ENCODE measurements at regions of chrX and their contacts with region 1.

Region 1: DNA sequence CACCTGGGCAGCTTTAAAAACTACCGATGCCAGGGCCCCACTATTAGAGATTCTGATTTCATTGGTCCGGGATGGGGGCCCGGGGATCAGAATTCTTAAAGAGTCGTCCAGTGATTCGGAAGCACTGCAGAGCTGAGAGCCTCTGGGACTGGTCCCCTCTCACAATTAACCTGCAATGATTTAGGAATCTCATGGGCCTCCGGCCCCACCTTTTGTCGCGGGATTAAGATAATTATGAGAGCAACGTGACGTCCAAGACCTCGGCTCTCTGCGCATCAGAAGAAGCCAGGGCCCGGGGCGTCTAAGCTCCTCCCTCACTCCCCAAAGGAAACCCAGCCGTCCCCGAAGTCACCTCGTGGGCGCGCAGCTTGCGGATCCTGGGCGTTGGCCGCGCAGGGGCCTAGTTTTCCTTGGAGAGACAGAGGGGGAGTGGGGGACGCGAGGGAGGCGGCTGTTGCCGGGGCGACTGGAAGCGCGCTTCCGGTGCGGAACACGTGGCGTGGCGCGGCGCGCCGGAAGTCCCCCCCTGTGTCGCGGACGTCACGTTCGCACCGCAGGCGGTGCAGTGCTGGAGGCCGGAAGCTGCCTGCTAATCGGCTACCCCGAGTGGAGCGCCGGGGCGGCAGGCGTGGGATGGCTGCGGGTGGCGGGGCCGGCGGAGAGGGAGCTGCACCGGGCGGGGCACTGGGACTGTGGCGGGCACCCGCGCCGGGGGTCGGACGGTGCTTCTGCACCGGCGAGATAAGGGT is at the start of gene GEMIN8:
- DNase-seq: peak; percentile 92
- H3K4me3 ChIP-seq: peak within 1 kb of the TSS; percentile 76 to 78
- H3K27ac ChIP-seq: peak within 1 kb of the TSS; percentile 92
- H3K4me1 ChIP-seq: peaks cover 14 to 20% of the 10 kb centered on the region in 2 experiments; a peak in 3 of 4 replicates
- H3K27me3 ChIP-seq: no peaks in the 10 kb centered on the region
- CTCF ChIP-seq: no peak
- EP300 ChIP-seq: peak in 1 of 2 experiments; percentile 51; a peak in 1 of 4 replicates
- RAD21 ChIP-seq: 0 out of 2 replicates have a peak, but pooled peaks have one; percentile 13
- polyA plus RNA-seq, gene GEMIN8: 69.8 and 78.0 TPM in 2 replicates

Region 2: GRCh38 chrX:13506574-13506973 is 523.0 kb before region 1 on chrX:
- CTCF ChIA-PET with region 1: interaction called, 32 read pairs
- POLR2A ChIA-PET with region 1: no interaction called
- DNase-seq: peak; percentile 62
- H3K4me3 ChIP-seq: peak overlapping the region in 1 of 2 experiments; percentile 9; a peak in 1 of 4 replicates
- H3K27ac ChIP-seq: no peak overlapping the region
- H3K4me1 ChIP-seq: no peaks in the 10 kb centered on the region
- H3K27me3 ChIP-seq: no peaks in the 10 kb centered on the region; the same call in 1 of the 2 replicates
- CTCF ChIP-seq: peak; percentile 94
- EP300 ChIP-seq: no peak
- RAD21 ChIP-seq: peak; percentile 92

Region 3: DNA sequence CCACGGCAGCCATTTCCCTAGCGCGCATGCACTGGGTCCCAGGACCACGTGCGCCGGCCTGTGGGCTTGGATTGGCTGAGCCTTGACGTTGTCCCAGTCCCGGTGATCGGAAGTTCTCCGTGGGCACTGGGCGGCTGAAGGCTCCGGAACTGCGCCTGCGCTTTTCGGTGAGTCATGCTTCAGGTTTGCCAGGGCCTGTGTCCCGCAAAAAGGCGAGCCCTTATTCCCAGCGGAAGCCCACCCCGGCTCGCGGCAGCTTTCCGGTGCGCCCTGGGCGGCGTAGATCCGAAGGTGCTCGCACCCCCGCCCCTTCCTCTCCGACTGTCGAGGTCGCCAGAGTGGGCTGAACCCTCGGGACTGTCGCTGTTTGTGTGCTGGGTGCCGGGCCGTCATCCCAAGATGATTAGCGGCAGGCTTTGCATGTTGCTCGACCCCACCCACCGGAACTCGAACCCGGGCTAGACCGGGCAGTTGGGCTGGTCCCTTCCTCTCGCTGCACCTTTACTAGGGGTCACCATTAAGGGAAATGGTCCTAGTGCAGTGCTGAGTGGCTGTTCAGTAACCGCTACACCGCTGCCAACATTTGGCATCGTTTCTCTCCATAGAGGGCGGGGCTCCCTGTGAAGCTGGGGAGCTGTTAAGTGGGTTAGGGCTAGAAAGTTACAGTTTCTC is 376.4 kb before region 1 on chrX and contains the start of gene TCEANC:
- CTCF ChIA-PET with region 1: interaction called, 6 read pairs
- POLR2A ChIA-PET with region 1: interaction called, 11 read pairs
- DNase-seq: peak; percentile 94
- H3K4me3 ChIP-seq: peak within 1 kb of the TSS; percentile 74 to 83
- H3K27ac ChIP-seq: peak within 1 kb of the TSS; percentile 91 to 97
- H3K4me1 ChIP-seq: peaks cover 0 to 6% of the 10 kb centered on the region in 2 experiments; a peak in 2 of 4 replicates
- H3K27me3 ChIP-seq: no peaks in the 10 kb centered on the region
- CTCF ChIP-seq: no peak
- EP300 ChIP-seq: no peak
- RAD21 ChIP-seq: no peak
- polyA plus RNA-seq, gene TCEANC: 0.84 and 1.2 TPM in 2 replicates

Region 4: DNA sequence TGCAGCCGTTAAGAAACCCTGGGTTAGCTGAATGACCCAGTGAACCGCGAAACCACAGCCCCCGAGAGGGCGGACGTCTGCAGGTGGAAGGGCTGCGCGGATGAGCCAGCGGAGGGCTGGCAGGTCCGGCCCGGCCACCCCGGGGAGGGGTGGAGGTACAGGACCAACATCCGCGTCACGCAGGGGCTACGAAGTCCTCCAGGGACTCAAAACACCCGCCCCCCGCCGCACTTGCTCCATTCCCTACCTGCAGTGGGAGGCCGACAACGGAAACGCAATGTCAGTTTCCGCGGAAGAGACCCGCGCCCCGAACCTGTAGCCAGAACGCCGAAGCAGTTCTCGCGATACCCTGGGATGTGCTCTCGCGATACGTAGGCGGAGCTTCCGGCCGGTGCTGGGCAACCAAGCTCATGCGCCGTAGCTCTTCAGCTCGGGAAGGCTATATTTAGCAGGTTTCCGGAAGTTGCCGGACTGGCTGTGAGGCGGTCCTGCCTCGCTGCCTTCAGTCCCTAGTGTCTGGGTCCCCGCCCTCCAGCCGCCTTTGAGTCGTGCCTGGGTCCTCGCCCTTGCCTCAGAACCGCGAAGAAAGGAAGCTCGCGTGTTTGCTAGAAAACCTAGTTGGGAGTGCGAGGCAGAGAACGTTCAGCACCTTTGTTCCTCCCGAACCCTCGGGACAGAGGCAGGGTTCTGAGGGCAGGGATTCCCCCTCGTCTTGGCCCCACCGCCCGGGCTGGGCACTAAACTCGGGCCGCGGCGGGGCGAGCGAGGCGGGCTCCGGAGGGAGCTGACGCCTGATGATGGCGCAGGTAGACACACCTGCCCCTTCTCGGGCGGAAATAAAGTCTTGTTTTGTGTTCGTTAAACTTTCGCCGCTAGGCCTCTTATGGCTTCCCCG is 295.1 kb before region 1 on chrX and contains the starts of genes OFD1 and TRAPPC2:
- CTCF ChIA-PET with region 1: interaction called, 4 read pairs
- POLR2A ChIA-PET with region 1: interaction called, 13 read pairs
- DNase-seq: peak; percentile 96
- H3K4me3 ChIP-seq: peak within 1 kb of the TSS; percentile 85 to 95
- H3K27ac ChIP-seq: peak within 1 kb of the TSS; percentile 86 to 97
- H3K4me1 ChIP-seq: peaks cover 4 to 19% of the 10 kb centered on the region in 2 experiments; a peak in 3 of 4 replicates
- H3K27me3 ChIP-seq: no peaks in the 10 kb centered on the region
- CTCF ChIP-seq: no peak
- EP300 ChIP-seq: 0 out of 4 replicates have a peak, but pooled peaks of 1 of the 2 experiments have one; percentile 4
- RAD21 ChIP-seq: no peak
- polyA plus RNA-seq, gene OFD1: 13.4 and 16.5 TPM in 2 replicates
- polyA plus RNA-seq, gene TRAPPC2: 10.4 and 12.5 TPM in 2 replicates

Region 5: DNA sequence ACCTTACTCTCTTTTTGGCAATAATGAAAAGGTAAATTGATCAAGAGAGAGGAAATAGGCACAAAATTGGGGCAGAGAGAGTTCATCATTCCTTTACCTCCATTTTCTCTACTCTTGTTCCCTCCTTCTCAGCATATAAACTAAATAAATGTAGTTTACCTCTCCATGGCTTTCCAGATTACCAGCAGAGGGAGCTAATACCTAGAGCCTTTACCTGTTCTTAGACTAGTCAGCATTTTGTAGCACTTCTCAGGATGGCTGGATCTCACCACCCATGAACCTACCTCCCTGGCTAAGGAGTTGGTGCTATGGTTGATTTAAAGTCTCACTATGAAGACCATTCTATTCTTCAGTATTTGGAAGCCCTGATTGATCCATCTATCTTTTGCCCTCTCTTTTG is 279.4 kb before region 1 on chrX:
- CTCF ChIA-PET with region 1: interaction called, 17 read pairs
- POLR2A ChIA-PET with region 1: interaction called, 3 read pairs
- DNase-seq: peak; percentile 36
- H3K4me3 ChIP-seq: no peak overlapping the region
- H3K27ac ChIP-seq: no peak overlapping the region
- H3K4me1 ChIP-seq: no peaks in the 10 kb centered on the region
- H3K27me3 ChIP-seq: no peaks in the 10 kb centered on the region
- CTCF ChIP-seq: peak; percentile 71
- EP300 ChIP-seq: no peak
- RAD21 ChIP-seq: peak; percentile 60

Region 6: GRCh38 chrX:13938051-13938828 is 91.4 kb before region 1 on chrX:
- CTCF ChIA-PET with region 1: interaction called, 4 read pairs
- POLR2A ChIA-PET with region 1: interaction called, 12 read pairs
- DNase-seq: peak; percentile 82
- H3K4me3 ChIP-seq: peak overlapping the region; percentile 35 to 46
- H3K27ac ChIP-seq: no peak overlapping the region
- H3K4me1 ChIP-seq: peaks cover 0 to 5% of the 10 kb centered on the region in 2 experiments; a peak in 1 of 4 replicates
- H3K27me3 ChIP-seq: peaks cover 37% of the 10 kb centered on the region
- CTCF ChIP-seq: no peak
- EP300 ChIP-seq: no peak
- RAD21 ChIP-seq: no peak

Region 7: DNA sequence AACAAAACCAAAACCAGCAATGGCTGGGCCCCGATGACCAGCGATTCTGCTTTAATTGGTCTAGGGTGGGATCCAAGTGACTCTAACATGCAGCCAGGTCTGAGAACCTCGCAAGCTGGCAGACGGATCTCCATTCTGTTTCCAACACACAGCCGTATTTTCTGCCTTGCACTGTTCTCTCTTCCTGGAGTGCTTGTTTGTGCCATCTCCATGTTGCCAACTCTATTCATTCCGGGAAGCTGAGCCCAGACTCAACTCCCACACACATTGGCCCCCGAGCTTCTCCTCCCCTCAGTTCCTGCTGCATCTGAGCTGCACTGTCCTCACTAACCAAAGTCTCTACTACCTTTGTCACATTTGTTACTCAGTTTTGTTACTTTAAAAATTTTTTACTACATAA is 35.5 kb before region 1 on chrX:
- CTCF ChIA-PET with region 1: no interaction called
- POLR2A ChIA-PET with region 1: no interaction called
- DNase-seq: no peak
- H3K4me3 ChIP-seq: no peak overlapping the region
- H3K27ac ChIP-seq: no peak overlapping the region
- H3K4me1 ChIP-seq: no peaks in the 10 kb centered on the region
- H3K27me3 ChIP-seq: no peaks in the 10 kb centered on the region
- CTCF ChIP-seq: no peak
- EP300 ChIP-seq: no peak
- RAD21 ChIP-seq: no peak

Region 8: DNA sequence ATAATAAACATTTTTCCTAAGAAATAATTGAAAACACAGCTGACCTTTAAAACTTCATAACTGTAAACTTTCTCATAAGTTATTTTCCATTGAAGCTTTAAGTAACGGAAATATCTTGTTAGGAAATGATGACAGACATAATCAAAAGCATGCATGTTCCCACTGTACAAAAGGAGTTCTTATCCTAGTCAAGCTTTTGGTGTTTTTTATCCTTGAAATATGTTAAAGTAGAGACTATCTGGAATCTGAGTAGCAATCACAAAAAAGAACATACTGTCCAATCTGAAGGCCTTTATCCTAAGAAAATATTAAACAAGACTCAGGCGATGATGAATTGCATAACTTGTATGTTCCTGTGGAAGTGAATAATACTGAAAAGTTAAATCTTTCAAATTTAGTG is 14.3 kb before region 1 on chrX:
- CTCF ChIA-PET with region 1: interaction called, 6 read pairs
- POLR2A ChIA-PET with region 1: interaction called, 11 read pairs
- DNase-seq: no peak
- H3K4me3 ChIP-seq: no peak overlapping the region
- H3K27ac ChIP-seq: peak overlapping the region; percentile 58 to 76; a peak in 3 of 4 replicates
- H3K4me1 ChIP-seq: no peaks in the 10 kb centered on the region; a peak in 1 of 4 replicates
- H3K27me3 ChIP-seq: no peaks in the 10 kb centered on the region
- CTCF ChIP-seq: no peak
- EP300 ChIP-seq: 0 out of 4 replicates have a peak, but pooled peaks of 1 of the 2 experiments have one; percentile 13
- RAD21 ChIP-seq: no peak